PC-3 (cell line): ENCODE measurements at regions of chr18 and their contacts with region 1.

Region 1: GRCh38 chr18:62714671-62715435 is 488 bp upstream of the PHLPP1 start:
- DNase-seq: peak; percentile 98
- ATAC-seq: peak; percentile 81
- H3K4me3 ChIP-seq: peak overlapping the region; percentile 73
- H3K27ac ChIP-seq: peak overlapping the region; percentile 43
- H3K4me1 ChIP-seq: peaks cover 34% of the 10 kb centered on the region
- H3K27me3 ChIP-seq: no peaks in the 10 kb centered on the region
- CTCF ChIP-seq: peak; percentile 87

Region 2: DNA sequence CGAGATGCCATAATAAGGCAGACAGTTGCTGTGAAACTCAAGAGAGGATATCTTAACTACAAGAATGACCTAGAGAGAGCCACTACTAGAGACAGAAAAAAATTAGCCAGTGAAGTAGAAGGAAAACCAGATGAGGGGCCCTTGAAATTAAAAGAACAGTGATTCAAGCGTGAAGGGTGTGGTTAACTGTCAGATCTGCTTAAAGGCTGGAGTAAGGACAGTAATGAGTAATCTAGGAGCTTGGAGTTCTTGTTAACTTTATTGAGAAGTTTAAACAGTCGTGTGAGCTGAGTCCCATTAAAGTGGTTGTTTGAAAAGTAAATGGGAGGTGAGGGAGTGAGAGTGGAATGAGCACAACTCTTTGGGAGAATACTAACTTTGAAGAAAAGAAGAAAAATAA is 549.3 kb before region 1 on chr18:
- CTCF ChIA-PET with region 1: no interaction called
- POLR2A ChIA-PET with region 1: no interaction called
- intact Hi-C with region 1: no loop called
- DNase-seq: no peak
- ATAC-seq: peak; percentile 56
- H3K4me3 ChIP-seq: no peak overlapping the region
- H3K27ac ChIP-seq: no peak overlapping the region
- H3K4me1 ChIP-seq: no peaks in the 10 kb centered on the region
- H3K27me3 ChIP-seq: no peaks in the 10 kb centered on the region
- CTCF ChIP-seq: no peak

Region 3: DNA sequence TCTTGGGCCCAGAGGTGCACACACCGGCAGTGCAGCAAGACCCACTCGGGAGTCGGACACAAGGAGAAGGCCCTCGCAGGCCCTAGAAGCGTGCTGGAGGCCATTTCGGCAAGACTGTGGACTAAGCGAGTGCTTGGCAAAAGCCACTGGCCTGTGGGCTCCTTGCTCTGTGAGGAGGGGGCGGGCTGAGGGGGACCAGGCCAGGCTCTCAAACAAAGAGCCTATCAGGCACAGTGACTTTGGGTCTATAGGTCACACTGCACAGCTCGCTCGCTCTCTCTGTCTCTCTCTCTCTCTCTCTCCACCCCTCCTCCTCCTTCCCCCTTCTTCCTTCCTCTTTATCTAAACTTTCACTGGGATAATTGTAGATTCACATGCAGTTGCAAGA is 215.6 kb before region 1 on chr18:
- CTCF ChIA-PET with region 1: no interaction called
- POLR2A ChIA-PET with region 1: no interaction called
- intact Hi-C with region 1: no loop called
- DNase-seq: no peak
- ATAC-seq: no peak
- H3K4me3 ChIP-seq: no peak overlapping the region
- H3K27ac ChIP-seq: no peak overlapping the region
- H3K4me1 ChIP-seq: no peaks in the 10 kb centered on the region
- H3K27me3 ChIP-seq: no peaks in the 10 kb centered on the region
- CTCF ChIP-seq: no peak

Region 4: DNA sequence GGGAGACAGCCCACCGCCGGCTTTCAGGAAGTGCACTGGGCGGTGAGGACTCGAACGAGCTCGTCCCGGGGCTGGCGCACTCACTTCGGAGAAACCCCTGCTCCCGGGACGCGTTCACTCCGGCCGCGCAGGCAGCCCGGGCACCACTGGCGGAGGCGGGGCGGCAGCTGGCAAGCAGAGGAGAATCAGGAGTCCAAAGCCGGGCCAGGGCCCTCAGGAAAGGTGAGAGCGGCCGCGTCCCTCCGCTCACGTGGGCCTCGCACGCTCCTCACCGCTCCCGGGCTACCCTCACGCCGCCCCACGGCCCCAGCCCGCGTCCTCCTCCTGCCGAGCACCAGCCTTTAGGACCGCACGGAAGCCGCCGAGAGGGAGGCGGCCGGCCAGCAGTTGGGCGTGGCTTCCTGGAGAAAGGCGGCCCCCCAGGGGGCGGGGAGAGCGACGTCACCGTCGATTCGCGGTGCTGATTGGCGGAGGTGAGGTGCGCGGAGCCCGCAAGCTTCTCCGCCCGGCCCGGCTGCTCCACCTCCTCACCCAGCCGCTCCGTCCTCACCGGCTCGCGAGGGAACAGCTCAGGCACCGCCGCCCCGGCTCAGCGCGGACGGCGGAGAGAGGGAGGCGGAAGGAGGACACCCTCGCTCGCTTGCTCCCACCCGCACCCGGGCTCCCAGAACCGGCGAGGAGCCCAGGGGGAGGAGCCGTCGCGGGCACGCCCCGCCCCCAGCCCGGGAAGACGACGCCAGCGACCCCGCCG is 192.2 kb before region 1 on chr18 and contains the start of gene ZCCHC2:
- CTCF ChIA-PET with region 1: no interaction called
- POLR2A ChIA-PET with region 1: no interaction called
- intact Hi-C with region 1: loop called (anchors 5 kb)
- DNase-seq: peak; percentile 98
- ATAC-seq: peak; percentile 79
- H3K4me3 ChIP-seq: peak within 1 kb of the TSS; percentile 93
- H3K27ac ChIP-seq: peak within 1 kb of the TSS; percentile 86
- H3K4me1 ChIP-seq: peaks cover 28% of the 10 kb centered on the region
- H3K27me3 ChIP-seq: no peaks in the 10 kb centered on the region
- CTCF ChIP-seq: no peak
- total RNA-seq, gene ZCCHC2: 17.3 and 24.9 TPM in 2 replicates

Region 5: DNA sequence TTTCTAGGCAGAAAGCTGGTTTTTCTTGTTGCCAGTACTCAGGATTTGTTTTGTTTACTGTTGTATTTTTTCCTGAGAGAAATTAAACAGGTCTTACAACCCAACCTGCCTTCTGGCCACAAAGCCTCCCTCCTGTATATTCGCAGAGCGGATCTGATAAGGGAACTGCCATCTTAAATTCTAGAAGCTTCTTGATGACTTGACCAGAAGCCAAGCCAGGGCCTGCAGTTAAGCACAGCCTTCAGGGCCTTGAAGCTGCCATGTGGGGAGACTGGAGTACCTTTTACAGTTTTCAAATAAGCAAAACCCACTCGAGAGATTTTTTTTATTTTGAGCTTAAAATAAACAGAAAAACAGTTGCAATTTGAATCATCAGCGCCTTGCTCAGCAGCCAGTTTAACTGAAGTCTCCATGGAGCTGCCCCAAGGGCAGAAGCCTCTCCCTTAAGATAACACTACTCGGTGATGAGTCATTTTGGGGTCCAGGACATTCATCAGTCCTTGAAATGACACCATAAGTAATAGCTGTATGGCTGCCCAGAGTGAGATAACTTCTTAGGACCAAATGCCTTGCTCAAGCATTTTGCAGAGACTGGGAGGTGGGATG is 51.0 kb before region 1 on chr18:
- CTCF ChIA-PET with region 1: no interaction called
- POLR2A ChIA-PET with region 1: no interaction called
- intact Hi-C with region 1: no loop called
- DNase-seq: peak; percentile 80
- ATAC-seq: peak; percentile 87
- H3K4me3 ChIP-seq: no peak overlapping the region
- H3K27ac ChIP-seq: peak overlapping the region; percentile 49
- H3K4me1 ChIP-seq: peaks cover 15% of the 10 kb centered on the region
- H3K27me3 ChIP-seq: no peaks in the 10 kb centered on the region
- CTCF ChIP-seq: no peak

Region 6: DNA sequence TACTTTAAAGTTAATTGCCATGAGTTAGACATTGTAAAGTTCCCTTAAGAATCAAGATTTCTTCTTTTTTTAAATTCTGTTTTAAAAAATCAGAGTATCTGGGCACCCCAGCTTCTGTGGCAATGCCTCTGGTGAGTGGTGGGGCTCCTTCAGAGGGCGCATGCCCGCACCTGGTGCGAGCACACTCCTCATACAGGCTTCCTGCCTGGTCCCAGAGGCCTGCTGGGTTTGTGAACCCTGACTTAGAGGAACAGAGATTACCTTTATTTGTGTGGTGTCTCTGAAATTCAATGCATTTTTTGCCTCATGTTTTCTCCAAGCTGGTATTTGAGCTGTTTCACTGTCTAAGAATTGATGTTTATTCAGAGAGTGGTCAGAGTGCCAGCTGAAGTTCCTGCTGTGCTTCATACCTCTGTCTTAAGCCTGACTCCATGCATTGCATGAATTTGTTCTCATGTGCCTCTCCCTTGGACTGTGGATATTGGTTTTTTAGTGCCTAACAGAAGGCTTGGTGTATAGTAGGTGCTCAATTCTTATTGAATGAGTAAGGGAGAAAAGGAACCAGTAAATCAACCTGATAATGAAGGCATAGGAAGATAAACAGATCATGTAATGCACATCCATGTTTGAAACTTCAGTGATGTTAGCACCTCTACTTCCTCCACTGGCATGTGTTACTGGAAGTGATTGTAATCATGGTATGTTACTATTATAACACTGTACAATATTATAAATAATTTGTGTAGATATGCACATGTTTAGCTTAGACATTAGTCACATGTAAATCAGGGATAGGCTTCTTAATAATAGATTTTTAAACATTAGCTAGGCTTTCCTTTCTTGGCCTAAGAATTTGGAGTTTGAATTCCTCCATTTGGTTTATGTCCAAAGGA is 29.5 kb after region 1 on chr18:
- CTCF ChIA-PET with region 1: interaction called, 13 read pairs
- POLR2A ChIA-PET with region 1: no interaction called
- intact Hi-C with region 1: no loop called
- DNase-seq: peak; percentile 5
- ATAC-seq: peak; percentile 57
- H3K4me3 ChIP-seq: no peak overlapping the region
- H3K27ac ChIP-seq: no peak overlapping the region
- H3K4me1 ChIP-seq: peaks cover 14% of the 10 kb centered on the region
- H3K27me3 ChIP-seq: no peaks in the 10 kb centered on the region
- CTCF ChIP-seq: no peak

Region 7: GRCh38 chr18:62881509-62882016 is 166.7 kb after region 1 on chr18:
- CTCF ChIA-PET with region 1: no interaction called
- POLR2A ChIA-PET with region 1: interaction called, 10 read pairs
- intact Hi-C with region 1: loop called (anchors 5 kb)
- DNase-seq: peak; percentile 92
- ATAC-seq: peak; percentile 88
- H3K4me3 ChIP-seq: no peak overlapping the region
- H3K27ac ChIP-seq: peak overlapping the region; percentile 44
- H3K4me1 ChIP-seq: peaks cover 44% of the 10 kb centered on the region
- H3K27me3 ChIP-seq: no peaks in the 10 kb centered on the region
- CTCF ChIP-seq: no peak

Region 8: GRCh38 chr18:62957885-62958472 is 243.1 kb after region 1 on chr18:
- CTCF ChIA-PET with region 1: interaction called, 7 read pairs
- POLR2A ChIA-PET with region 1: no interaction called
- intact Hi-C with region 1: loop called (anchors 1 kb)
- DNase-seq: peak; percentile 68
- ATAC-seq: peak; percentile 45
- H3K4me3 ChIP-seq: no peak overlapping the region
- H3K27ac ChIP-seq: no peak overlapping the region
- H3K4me1 ChIP-seq: peaks cover 23% of the 10 kb centered on the region
- H3K27me3 ChIP-seq: no peaks in the 10 kb centered on the region
- CTCF ChIP-seq: peak; percentile 61

Region 9: DNA sequence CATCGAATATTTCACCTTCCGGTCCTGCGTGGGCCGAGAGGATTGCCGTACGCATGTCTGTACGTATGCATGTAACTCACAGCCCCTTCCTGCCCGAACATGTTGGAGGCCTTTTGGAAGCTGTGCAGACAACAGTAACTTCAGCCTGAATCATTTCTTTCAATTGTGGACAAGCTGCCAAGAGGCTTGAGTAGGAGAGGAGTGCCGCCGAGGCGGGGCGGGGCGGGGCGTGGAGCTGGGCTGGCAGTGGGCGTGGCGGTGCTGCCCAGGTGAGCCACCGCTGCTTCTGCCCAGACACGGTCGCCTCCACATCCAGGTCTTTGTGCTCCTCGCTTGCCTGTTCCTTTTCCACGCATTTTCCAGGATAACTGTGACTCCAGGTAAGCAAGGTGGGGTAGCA is 761.8 kb after region 1 on chr18 and contains the start of gene SERPINB5:
- CTCF ChIA-PET with region 1: no interaction called
- POLR2A ChIA-PET with region 1: interaction called, 10 read pairs
- intact Hi-C with region 1: no loop called
- DNase-seq: peak; percentile 96
- ATAC-seq: peak; percentile 74
- H3K4me3 ChIP-seq: peak within 1 kb of the TSS; percentile 95
- H3K27ac ChIP-seq: peak within 1 kb of the TSS; percentile 88
- H3K4me1 ChIP-seq: peaks cover 68% of the 10 kb centered on the region
- H3K27me3 ChIP-seq: no peaks in the 10 kb centered on the region
- CTCF ChIP-seq: no peak
- total RNA-seq, gene SERPINB5: 96.5 and 104 TPM in 2 replicates